CD4-positive, alpha-beta T cell (primary cell): ENCODE measurements at regions of chr12 and their contacts with region 1.

Region 1: DNA sequence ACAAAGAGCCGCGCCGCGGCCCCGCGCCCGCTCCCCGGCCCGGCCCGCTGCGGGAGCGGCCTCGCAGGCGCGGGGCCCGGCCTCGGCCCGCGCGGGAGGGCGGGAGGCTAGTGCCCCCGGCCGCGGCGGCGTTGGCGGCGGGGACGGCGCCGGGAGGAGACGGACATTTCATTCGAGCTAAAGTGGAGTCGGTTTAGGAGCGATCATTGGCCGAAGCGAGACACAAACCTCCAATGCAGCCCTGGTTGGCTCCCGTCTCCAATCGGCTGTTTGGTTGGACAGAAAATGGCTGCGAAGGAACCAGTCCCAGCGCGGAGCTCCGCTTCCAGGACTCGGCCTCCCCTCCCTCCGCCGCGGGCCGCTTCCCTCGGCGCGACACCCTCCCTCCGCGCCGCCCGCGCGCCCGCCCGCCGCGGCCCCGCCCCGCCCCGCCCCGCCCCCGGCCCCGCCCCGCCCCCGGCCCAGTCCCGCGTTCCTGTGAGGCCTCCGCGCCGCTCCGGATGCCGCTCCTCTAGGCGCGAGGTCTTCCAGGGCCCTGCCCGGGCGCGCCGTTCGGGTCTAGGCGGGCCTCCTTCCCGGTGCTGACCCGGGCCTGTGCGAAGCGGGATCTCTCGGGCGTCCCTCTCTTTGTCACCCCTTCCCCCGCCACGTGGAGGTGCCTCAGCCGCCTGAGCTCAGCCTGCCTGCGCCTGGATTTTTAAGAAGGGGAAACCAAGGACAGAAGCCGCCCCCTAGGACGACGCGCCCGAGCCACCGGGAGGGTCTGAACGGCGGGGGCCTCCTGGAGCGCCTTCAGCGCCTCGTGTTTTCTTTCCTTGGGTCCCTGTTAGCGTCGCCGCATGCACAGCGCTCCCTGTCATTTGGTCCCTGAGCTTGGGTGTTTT is at the start of gene NFYB:
- DNase-seq: peak; percentile 85 to 98 (median 90)
- ATAC-seq: peak; percentile 96
- H3K4me3 ChIP-seq: peak within 1 kb of the TSS; percentile 63
- H3K4me3 Mint-ChIP-seq: peak within 1 kb of the TSS; percentile 93
- H3K27ac ChIP-seq: peak within 1 kb of the TSS in 1 of 2 donors; percentile 43
- H3K27ac Mint-ChIP-seq: peak within 1 kb of the TSS; percentile 80
- H3K4me1 ChIP-seq: peaks cover 18% of the 10 kb centered on the region
- H3K4me1 Mint-ChIP-seq: no peaks in the 10 kb centered on the region
- H3K27me3 ChIP-seq: no peaks in the 10 kb centered on the region
- H3K27me3 Mint-ChIP-seq: no peaks in the 10 kb centered on the region
- CTCF ChIP-seq: no peak
- total RNA-seq, gene NFYB: 12.8 to 14.6 TPM

Region 2: GRCh38 chr12:103965590-103966504 is 172.3 kb before region 1 on chr12 and contains the start of gene TDG:
- CTCF ChIA-PET with region 1: no interaction called
- POLR2A ChIA-PET with region 1: interaction called, 32 read pairs
- intact Hi-C with region 1: no loop called
- DNase-seq: peak; percentile 89 to 99 (median 95)
- ATAC-seq: peak; percentile 94
- H3K4me3 ChIP-seq: peak within 1 kb of the TSS; percentile 62
- H3K4me3 Mint-ChIP-seq: peak within 1 kb of the TSS; percentile 94
- H3K27ac ChIP-seq: peak within 1 kb of the TSS; percentile 74 to 91
- H3K27ac Mint-ChIP-seq: peak within 1 kb of the TSS; percentile 95
- H3K4me1 ChIP-seq: peaks cover 32% of the 10 kb centered on the region
- H3K4me1 Mint-ChIP-seq: peaks cover 57% of the 10 kb centered on the region
- H3K27me3 ChIP-seq: no peaks in the 10 kb centered on the region
- H3K27me3 Mint-ChIP-seq: no peaks in the 10 kb centered on the region
- CTCF ChIP-seq: peak; percentile 18
- total RNA-seq, gene TDG: 27.5 to 29.6 TPM

Region 3: DNA sequence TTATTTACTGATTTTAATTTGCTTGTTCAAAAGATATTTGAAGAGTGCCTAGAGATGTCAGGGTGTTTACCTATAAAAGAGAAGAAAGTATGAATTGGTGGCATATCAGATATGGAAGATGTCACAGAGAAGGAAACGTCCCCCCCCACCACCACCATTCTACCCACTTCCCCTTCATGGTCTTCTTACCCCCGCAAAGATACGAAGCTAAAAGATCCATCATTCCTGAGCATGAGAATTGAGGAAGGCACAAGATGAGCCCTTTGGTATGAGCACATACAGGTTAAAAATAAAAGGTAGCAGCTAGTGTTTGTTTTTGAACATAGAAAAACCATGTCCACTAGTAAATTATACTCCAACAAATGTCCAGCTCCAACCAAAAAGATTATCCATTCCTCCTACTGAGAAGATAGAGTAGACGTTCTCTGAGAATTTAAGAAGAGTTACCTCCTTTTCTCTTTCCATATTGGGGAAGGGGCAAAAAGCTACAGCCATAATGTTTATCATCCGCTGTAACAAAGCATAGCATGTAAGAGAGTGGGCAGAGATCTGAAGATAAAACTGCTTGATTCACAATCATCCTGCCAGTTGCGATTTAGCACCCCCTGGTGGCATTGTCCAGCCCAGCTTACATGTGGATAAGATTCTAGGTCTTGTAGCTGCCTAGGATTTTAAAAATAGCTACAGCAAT is 29.3 kb before region 1 on chr12:
- CTCF ChIA-PET with region 1: interaction called, 4 read pairs
- POLR2A ChIA-PET with region 1: interaction called, 15 read pairs
- intact Hi-C with region 1: no loop called
- DNase-seq: peak; percentile 77 to 92 (median 84)
- ATAC-seq: peak; percentile 100
- H3K4me3 ChIP-seq: no peak overlapping the region
- H3K4me3 Mint-ChIP-seq: peak overlapping the region; percentile 59
- H3K27ac ChIP-seq: no peak overlapping the region
- H3K27ac Mint-ChIP-seq: peak overlapping the region; percentile 24
- H3K4me1 ChIP-seq: no peaks in the 10 kb centered on the region
- H3K4me1 Mint-ChIP-seq: peaks cover 14% of the 10 kb centered on the region
- H3K27me3 ChIP-seq: no peaks in the 10 kb centered on the region
- H3K27me3 Mint-ChIP-seq: no peaks in the 10 kb centered on the region
- CTCF ChIP-seq: peak; percentile 89

Region 4: GRCh38 chr12:104286538-104287482 is 148.7 kb after region 1 on chr12:
- CTCF ChIA-PET with region 1: interaction called, 3 read pairs
- POLR2A ChIA-PET with region 1: interaction called, 21 read pairs
- intact Hi-C with region 1: loop called in 1 of 2 experiments (anchors 5 kb)
- DNase-seq: peak; percentile 70 to 96 (median 86)
- ATAC-seq: peak; percentile 84
- H3K4me3 ChIP-seq: peak overlapping the region; percentile 90
- H3K4me3 Mint-ChIP-seq: peak overlapping the region; percentile 98
- H3K27ac ChIP-seq: peak overlapping the region; percentile 67 to 84
- H3K27ac Mint-ChIP-seq: peak overlapping the region; percentile 96
- H3K4me1 ChIP-seq: peaks cover 35% of the 10 kb centered on the region
- H3K4me1 Mint-ChIP-seq: peaks cover 35% of the 10 kb centered on the region
- H3K27me3 ChIP-seq: peaks cover 0 to 7% of the 10 kb centered on the region in 2 experiments
- H3K27me3 Mint-ChIP-seq: no peaks in the 10 kb centered on the region
- CTCF ChIP-seq: no peak

Region 5: DNA sequence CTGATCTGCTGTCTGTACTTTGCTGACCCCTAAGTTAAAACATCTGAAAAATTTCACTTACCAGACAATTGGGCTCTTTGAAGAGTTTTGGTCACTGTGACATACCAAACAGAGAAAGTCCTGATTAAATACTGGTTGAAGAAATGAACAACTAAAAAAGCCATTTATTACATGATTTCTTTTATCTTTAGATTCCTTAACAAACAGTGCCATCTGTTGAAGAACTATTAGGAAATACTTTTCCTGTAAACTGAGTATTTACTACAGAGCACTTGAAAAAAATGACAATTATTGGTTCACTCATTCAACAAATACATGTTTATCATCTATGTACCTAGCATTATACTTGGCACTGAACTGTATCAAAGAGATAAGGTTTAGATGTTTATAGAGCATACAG is 962.8 kb after region 1 on chr12:
- CTCF ChIA-PET with region 1: no interaction called
- POLR2A ChIA-PET with region 1: no interaction called
- intact Hi-C with region 1: loop called in 1 of 2 experiments (anchors 5 kb)
- DNase-seq: no peak
- ATAC-seq: no peak
- H3K4me3 ChIP-seq: no peak overlapping the region
- H3K4me3 Mint-ChIP-seq: no peak overlapping the region
- H3K27ac ChIP-seq: no peak overlapping the region
- H3K27ac Mint-ChIP-seq: no peak overlapping the region
- H3K4me1 ChIP-seq: no peaks in the 10 kb centered on the region
- H3K4me1 Mint-ChIP-seq: no peaks in the 10 kb centered on the region
- H3K27me3 ChIP-seq: peaks cover 4 to 9% of the 10 kb centered on the region in 2 experiments
- H3K27me3 Mint-ChIP-seq: peaks cover 39% of the 10 kb centered on the region
- CTCF ChIP-seq: no peak